ENCODE measurements at regions of chr5 and their contacts with region 1.

Region 1: GRCh38 chr5:59799668-59800346 is 93.7 kb downstream of the PDE4D start:
- DNase-seq: no peak
- H3K4me3 ChIP-seq: no peak overlapping the region
- CTCF ChIP-seq: no peak
- POLR2A ChIP-seq: no peak

Region 2: DNA sequence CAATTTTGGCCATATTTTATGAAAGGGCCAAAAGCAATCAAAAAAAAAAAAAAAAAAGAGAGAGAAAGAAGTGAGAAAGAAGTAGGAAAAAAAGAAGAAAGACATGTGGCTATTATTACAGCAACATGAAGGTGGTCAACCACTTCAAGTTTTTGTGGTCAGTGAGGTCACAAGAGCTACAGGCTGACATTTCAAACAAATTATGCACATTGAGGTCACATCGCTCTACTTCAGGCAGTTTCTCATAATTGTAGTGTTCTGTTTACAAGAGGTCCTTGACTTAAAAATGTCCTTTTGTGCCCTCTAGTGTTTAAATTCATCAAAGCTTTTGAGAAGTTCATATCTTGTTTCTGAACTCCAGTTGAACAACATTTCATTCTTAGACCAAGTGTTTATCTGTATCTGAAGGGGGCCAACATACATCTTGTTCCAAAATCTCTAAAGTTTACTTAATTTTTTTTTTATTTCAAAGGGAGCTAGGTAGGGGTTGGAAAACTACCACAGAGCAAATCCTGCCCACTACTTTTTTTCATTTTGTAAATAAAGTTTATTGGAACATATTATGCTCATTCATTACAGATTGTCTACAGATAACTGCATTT is 419.4 kb before region 1 on chr5:
- intact Hi-C with region 1: loop called (anchors 10 kb)
- DNase-seq: no peak
- H3K4me3 ChIP-seq: no peak overlapping the region
- CTCF ChIP-seq: no peak
- POLR2A ChIP-seq: no peak

Region 3: GRCh38 chr5:59685793-59686192 is 114.0 kb before region 1 on chr5:
- intact Hi-C with region 1: no loop called
- DNase-seq: no peak
- H3K4me3 ChIP-seq: no peak overlapping the region
- CTCF ChIP-seq: no peak
- POLR2A ChIP-seq: no peak

Region 4: DNA sequence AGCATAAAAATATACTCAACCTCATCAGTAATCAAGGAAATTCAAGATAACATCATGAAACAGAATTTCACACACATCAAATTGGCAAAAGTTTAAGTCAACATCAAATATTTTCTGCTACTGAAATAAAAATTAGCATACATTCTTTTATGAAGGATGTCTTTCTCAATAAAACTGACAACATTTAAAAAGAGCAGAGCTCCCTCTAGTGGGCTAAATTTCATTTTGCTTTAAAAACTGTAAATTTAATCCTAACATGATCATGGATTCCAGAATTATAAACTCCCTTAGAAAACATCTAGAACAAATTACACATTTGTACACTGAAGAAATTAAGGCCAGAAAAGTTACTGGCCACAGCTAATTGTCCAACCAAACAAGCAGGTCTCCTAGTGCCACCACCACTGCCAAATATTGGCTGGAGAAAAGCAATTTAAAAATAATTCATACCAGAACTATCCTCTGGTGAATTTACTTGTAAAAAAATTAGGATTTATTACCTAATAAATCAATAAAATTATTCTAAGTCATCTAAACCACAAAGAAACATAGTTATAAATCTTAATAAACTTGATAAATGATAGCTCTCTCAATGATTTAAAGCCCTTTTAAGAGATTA is 869.0 kb after region 1 on chr5:
- intact Hi-C with region 1: loop called (anchors 10 kb)
- DNase-seq: no peak
- H3K4me3 ChIP-seq: no peak overlapping the region
- CTCF ChIP-seq: no peak
- POLR2A ChIP-seq: no peak